ENCODE measurements at regions of chr4 and their contacts with region 1.

Region 1: GRCh38 chr4:26081795-26082498 is 167.9 kb downstream of the SMIM20 start:
- H3K4me3 ChIP-seq: no peak overlapping the region
- H3K27ac ChIP-seq: no peak overlapping the region
- H3K4me1 ChIP-seq: 0 out of 2 replicates have a peak, but pooled peaks cover 2% of the 10 kb centered on the region
- CTCF ChIP-seq: no peak

Region 2: GRCh38 chr4:26069218-26069617 is 12.7 kb before region 1 on chr4:
- CTCF ChIA-PET with region 1: interaction called, 11 read pairs
- POLR2A ChIA-PET with region 1: no interaction called
- H3K4me3 ChIP-seq: no peak overlapping the region
- H3K27ac ChIP-seq: no peak overlapping the region
- H3K4me1 ChIP-seq: no peaks in the 10 kb centered on the region
- CTCF ChIP-seq: no peak

Measured in HEK293 (cell line).